ENCODE measurements at regions of chr2 and their contacts with region 1.

Region 1: DNA sequence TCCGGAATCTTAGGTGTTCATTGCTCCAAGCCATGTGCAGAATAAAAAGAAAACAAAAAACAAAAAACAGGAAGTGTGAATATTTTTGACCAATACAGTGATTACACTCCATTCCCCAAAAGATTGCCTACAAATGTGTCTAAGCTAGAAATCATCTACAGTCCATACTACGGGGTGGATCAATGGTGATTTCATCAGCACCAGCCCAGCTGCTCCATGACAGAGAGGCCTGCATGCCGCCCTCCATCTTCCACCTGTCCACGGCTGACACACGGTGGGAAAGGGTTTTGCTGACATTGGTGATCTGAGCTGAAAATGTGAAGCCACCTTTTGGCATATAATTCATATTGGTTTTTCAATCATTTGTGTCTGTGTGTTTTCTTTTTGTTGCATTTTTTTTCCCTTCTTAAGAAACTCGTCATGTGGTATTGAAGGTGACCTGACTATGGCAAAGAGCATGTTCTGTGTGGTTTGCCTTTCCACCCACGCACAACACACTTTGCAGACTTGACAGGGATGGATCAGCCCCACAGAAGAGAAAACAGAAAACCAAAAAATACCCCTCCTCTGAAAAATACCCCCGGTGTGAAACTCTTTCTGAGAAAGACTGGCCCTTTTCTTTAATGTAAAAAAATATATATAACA is 533.1 kb downstream of the RNF144A start:
- DNase-seq: no peak
- ATAC-seq: no peak
- H3K4me3 ChIP-seq: no peak overlapping the region
- H3K27ac ChIP-seq: no peak overlapping the region
- H3K4me1 ChIP-seq: no peaks in the 10 kb centered on the region
- H3K27me3 ChIP-seq: no peaks in the 10 kb centered on the region
- CTCF ChIP-seq: no peak
- POLR2A ChIP-seq: no peak
- RAD21 ChIP-seq: no peak

Region 2: DNA sequence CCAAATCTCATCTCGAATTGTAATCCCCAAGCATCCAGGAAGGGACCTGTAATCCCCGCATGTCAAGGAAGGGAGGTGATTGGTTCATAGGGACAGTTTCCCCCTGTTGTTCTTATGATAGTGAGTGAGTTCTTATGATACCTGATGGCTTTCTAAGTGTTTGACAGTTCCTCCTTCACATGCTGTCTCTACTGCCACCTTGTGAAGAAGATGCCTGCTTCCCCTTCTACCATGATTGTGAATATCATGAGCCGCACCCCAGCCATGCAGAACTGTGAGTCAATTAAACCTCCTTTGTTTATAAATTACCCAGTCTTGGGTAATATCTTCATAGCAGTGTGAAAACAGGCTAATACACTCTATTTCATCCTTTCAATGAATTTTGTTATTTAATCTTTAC is 86.4 kb before region 1 on chr2:
- CTCF ChIA-PET with region 1: no interaction called
- POLR2A ChIA-PET with region 1: interaction called, 15 read pairs
- dilution Hi-C with region 1: no loop called
- in situ Hi-C with region 1: no loop called
- intact Hi-C with region 1: no loop called
- DNase-seq: no peak
- ATAC-seq: no peak
- H3K4me3 ChIP-seq: no peak overlapping the region
- H3K27ac ChIP-seq: no peak overlapping the region
- H3K4me1 ChIP-seq: no peaks in the 10 kb centered on the region
- H3K27me3 ChIP-seq: no peaks in the 10 kb centered on the region
- CTCF ChIP-seq: no peak
- POLR2A ChIP-seq: no peak
- RAD21 ChIP-seq: no peak